ENCODE measurements at regions of chr7 and their contacts with region 1.

Region 1: GRCh38 chr7:134755401-134756022 is 23.9 kb upstream of the CALD1 start:
- H3K4me3 ChIP-seq: no peak overlapping the region
- H3K27ac ChIP-seq: no peak overlapping the region
- H3K4me1 ChIP-seq: no peaks in the 10 kb centered on the region
- CTCF ChIP-seq: peak; percentile 18; the same call in 1 of the 2 replicates

Region 2: DNA sequence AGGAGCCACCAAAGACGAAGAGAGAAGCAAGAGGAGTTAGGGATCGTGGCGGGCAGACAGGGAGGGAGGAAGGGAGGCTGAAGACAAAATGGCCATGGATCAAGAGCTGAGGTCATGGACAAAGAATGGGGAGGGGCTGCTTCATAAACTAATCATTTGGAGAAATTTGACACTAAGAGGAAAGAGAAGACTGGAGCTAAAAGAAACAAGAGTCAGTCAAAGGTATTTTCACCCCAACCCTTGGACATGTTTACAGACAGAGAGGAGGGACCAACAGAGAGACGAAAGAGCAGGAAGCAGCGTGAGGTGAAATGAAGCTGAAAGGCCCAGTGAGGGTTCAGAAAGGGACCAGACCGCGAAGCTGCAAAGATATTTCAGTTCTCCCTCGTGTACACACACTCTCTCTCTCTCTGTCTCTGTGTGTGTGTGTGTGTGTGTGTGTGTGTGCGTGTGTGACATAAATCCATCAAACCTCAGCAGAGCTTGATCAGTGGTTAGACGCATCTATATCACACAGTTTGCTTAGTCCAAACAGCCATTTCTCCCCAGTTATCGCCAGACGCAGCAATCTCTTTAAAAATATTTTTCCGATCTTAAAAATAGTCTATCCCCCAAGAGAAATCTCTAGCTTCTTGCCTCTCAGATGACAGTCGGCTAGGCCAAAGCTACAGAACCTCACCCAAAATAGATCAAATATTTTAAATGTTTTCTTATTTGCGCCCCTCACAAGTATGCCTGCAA is 11.4 kb after region 1 on chr7:
- CTCF ChIA-PET with region 1: interaction called, 10 read pairs
- POLR2A ChIA-PET with region 1: interaction called, 3 read pairs
- H3K4me3 ChIP-seq: no peak overlapping the region
- H3K27ac ChIP-seq: no peak overlapping the region
- H3K4me1 ChIP-seq: no peaks in the 10 kb centered on the region
- CTCF ChIP-seq: no peak

Region 3: GRCh38 chr7:135224027-135224426 is 468.5 kb after region 1 on chr7:
- CTCF ChIA-PET with region 1: no interaction called
- POLR2A ChIA-PET with region 1: no interaction called
- H3K4me3 ChIP-seq: no peak overlapping the region
- H3K27ac ChIP-seq: no peak overlapping the region
- H3K4me1 ChIP-seq: no peaks in the 10 kb centered on the region
- CTCF ChIP-seq: no peak

Measured in HEK293 (cell line).